Tibial artery (tissue), 4 donors: ENCODE measurements at regions of chr7 and their contacts with region 1.

Region 1: DNA sequence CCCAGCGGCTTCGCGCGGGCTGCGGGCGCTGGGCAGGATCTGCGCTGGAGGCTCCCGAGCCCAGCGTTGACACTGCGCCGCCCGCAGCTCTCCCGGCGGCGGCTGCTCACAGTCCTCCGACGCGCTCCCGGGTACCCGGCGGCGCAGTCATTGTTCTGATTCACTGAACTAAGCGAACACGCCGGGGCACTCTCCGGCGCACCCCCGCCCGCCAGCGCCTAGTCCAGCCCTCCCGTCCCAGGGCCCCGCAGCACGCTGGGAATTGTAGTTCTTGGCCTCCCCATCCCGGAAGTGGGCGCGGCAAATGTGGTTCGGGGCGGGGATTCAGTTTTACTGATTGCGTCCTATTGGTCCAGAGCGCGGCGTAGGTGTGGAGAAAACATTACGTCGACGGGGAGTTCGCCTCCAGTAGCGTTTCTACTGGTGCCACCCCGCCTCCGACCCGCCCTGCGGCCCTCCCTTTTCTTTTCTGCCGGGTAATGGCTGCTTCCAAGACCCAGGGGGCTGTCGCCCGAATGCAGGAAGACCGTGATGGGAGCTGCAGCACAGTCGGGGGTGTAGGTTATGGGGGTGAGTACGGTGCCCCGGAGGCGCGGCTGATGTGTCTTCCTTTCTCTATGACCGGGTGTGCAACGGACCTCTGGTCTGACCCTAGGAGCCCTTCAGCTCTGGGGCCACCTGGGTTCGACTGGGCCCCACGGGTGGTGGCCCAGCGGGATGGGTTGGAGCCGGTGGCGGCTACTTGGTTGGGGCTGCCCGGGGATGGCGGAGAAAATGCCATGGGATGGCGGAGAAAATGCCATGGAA is at the starts of genes DOCK4 and ZNF277:
- DNase-seq: peak; percentile 99 to 100
- H3K4me3 ChIP-seq: peak within 1 kb of the TSS; percentile 87 to 91
- H3K27ac ChIP-seq: peak within 1 kb of the TSS; percentile 85 to 88
- H3K4me1 ChIP-seq: peaks cover 0 to 31% (median 4%) of the 10 kb centered on the region in 4 donors
- H3K27me3 ChIP-seq: no peaks in the 10 kb centered on the region
- CTCF ChIP-seq: no peak

Region 2: DNA sequence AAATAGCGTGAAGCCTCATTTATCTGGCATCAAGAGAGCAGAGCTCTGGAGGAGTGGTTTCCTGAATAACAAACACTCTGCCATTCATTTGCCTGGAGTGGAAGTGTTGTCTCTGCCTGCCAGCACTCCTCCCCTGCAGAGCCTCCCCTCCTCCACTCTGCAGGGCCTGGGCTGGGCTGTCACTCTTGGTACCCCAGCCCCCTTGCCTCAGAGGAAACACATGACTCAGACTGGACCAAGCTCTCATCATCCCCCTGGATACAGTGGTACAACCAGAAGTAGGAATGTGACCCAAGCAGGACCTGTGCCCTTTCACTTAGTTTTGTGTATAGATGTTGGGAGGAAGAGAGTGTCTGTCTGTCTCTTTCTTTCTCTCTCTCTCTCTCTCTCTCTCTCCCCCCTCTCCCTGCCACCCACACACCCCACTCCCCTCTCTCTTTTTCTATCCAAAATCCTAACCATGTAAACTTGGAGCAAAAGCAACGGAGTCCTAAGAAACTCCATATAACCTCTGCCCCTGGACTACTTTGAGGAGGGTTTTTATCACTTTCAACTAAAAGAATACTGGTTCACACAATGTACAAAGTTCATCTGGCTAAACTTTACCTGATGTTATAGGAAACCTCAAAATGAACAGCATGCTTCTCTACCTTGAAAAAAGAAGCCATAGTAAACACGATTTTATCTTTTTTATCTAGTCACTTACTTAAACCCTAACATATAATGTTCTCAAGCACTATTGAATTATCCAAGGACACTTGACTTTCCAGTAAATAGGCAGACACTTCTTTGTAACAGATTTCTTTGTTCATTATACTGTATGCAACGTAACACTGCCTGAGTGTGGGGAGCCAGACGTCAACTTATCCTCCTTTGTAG is 44.1 kb before region 1 on chr7:
- intact Hi-C with region 1: no loop called
- DNase-seq: peak in 1 of 2 donors; percentile 26
- H3K4me3 ChIP-seq: no peak overlapping the region
- H3K27ac ChIP-seq: no peak overlapping the region
- H3K4me1 ChIP-seq: no peaks in the 10 kb centered on the region
- H3K27me3 ChIP-seq: no peaks in the 10 kb centered on the region
- CTCF ChIP-seq: no peak

Region 3: DNA sequence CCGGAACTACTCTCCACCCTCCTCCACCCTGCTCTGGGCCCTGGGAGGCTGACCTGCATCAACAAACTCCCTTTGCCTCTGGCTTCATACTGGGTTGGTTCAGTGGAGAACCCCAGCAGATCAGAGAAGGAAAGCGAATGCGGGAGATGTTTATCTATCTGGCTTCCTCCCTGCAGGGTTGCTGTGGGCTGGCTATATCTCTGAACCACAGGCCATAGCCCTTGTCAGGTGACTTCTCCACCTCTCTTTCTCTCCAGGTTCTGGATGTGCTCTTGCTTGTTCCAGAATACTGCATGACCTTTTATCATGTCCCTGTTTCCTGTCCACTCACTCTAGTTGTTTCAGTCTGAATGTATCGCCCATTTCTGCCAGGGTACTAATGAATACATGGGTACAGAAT is 192.1 kb after region 1 on chr7:
- intact Hi-C with region 1: loop called (anchors 5 kb)
- DNase-seq: no peak
- H3K4me3 ChIP-seq: no peak overlapping the region
- H3K27ac ChIP-seq: no peak overlapping the region
- H3K4me1 ChIP-seq: no peaks in the 10 kb centered on the region
- H3K27me3 ChIP-seq: no peaks in the 10 kb centered on the region
- CTCF ChIP-seq: no peak

Region 4: DNA sequence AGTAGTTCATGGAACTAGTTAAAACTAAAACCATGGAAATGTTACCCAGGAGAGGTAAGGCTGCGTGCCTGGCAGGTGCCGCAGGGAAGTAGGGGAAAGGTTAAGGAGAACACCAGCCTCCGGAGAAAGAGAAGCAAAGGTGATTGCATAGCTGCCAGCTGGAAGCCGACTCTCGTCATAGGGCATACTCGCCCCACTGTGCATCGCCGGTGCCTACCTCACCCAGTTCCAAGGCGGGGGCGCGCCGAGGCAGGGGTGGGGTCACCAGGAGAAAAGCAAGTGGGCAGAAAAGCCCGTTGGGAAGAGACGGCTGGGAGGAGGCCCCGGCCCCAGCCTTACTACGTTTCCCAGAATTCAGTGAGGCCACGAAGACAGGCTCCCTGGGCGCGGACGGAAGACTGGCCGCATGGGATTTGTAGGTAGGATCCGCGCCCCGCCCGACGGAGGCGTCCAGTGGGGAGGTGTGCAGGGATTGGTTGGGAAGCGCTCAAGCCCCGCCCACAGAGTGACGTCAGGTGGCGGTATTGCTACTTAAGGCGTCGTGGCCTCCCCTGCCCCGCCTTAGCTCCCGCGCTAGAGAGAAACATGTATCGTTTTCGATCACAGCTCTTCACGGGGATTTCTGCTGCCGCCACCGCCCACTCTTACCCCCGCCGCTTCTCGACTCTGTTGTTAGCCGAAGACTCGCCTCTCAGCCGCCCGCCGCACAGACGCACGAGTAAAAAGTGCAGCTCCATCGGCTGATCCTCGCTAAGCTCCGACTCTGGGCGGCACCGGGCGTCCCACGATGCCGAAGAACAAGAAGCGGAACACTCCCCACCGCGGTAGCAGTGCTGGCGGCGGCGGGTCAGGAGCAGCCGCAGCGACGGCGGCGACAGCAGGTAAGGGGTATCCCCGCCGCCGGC is 243.7 kb after region 1 on chr7 and contains the start of gene IFRD1:
- intact Hi-C with region 1: loop called (anchors 5 kb)
- DNase-seq: peak; percentile 99 to 100
- H3K4me3 ChIP-seq: peak within 1 kb of the TSS; percentile 98 to 99
- H3K27ac ChIP-seq: peak within 1 kb of the TSS; percentile 99 to 100
- H3K4me1 ChIP-seq: peaks cover 0 to 31% (median 20%) of the 10 kb centered on the region in 4 donors
- H3K27me3 ChIP-seq: no peaks in the 10 kb centered on the region
- CTCF ChIP-seq: no peak

Region 5: DNA sequence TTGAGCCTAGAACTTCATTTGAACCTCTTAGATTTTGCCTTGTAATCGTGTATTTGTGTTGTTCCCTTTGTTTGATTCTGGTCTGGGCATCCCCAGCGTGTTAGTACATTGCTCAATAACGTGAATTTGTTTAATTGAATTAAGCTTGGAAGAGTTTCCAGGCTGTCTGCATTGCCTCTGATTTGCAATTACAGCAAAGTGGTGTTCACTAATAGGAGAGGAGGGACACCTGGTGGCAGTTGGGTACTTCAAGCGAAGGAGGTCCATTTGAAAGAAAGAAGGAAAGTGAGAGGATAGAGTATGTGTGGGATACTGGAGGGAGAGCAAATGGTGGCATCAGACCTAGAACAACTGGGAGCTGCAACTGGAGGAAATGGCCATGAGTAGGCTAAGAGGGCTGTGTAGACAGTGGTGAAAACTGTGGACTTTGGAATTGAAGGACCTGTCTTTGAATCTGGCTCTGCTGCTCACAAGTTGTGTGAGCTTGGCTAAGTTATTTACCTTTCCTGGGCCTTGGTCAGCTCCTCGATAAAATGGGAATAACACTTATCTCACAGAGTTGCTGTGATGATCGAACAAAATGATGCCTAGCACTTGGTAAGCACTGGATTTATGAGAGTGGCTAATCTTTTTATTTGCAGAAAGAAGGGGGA is 289.5 kb after region 1 on chr7:
- intact Hi-C with region 1: loop called (anchors 10 kb)
- DNase-seq: peak in 1 of 2 donors; percentile 66
- H3K4me3 ChIP-seq: no peak overlapping the region
- H3K27ac ChIP-seq: no peak overlapping the region
- H3K4me1 ChIP-seq: peaks cover 0 to 4% (median 0%) of the 10 kb centered on the region in 4 donors
- H3K27me3 ChIP-seq: no peaks in the 10 kb centered on the region
- CTCF ChIP-seq: peak; percentile 71 to 74